ENCODE measurements at regions of chr9 and their contacts with region 1.

Region 1: DNA sequence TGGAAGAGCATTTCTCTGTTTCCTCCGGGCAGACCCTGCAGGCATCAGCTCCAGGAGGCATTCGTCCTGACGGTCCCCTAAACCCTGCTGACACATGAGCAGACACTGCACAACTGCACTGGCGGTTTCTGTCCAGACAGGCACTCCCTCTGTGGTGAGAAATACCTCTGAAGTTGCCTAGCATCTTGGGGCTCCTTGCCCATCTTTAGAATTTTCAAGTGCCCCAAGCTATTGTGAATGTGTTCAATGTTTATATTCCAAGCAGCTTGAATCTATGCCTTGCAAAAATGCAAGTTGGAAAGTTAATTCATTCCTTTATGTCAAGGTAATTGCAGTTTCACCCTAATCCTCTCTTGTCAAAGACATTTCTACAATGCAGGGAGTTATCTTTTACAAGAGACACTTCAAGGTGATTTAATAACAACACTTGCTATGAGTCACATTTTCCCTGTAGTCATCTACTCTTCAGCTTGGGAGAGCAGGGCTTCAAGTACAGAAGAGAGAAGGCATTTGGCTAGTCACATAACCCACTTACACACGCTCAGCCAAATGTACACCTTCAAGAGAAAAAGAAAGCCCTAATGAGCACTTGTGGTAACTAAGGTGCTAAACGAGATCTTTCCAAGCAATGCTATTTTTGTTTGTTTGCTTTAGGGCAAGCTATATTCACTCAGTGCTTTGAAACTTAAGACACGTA is 302.5 kb downstream of the MLLT3 start:
- DNase-seq: no peak
- H3K4me3 Mint-ChIP-seq: no peak overlapping the region
- H3K27ac Mint-ChIP-seq: peak overlapping the region; percentile 24
- H3K4me1 Mint-ChIP-seq: peaks cover 41% of the 10 kb centered on the region
- H3K27me3 Mint-ChIP-seq: no peaks in the 10 kb centered on the region

Region 2: DNA sequence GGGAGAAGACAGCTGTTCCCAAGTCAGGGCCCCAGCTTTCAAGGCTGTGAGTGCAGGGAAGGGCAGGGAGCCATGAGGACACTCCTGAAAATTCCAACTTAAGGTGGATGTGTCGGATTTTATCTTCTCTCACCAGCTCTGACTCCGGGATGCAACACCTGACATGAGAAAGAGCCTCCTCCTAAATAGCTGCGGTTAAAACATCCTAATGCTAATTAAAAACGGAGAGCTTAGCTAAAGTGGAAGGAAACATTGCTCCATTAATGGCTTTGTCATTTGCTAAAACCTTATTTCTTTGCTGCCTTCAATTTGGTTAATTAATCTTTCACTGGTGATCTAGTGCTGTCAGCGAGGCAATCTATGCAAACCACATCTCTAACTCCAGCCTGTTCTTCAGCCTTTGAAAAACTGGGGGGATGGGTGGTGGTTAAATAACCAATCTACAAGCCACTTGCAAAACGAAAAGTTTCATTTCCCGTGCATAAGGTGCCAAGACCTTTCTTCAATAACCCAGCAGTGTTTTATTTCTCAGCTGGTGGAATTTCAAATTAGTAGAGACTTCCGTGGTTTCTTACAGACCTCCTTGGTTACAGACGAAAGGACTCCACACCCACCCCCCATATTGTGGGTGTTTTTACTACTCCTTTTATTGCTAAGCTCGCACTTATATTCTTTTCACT is 77.1 kb before region 1 on chr9:
- intact Hi-C with region 1: loop called (anchors 5 kb)
- DNase-seq: peak; percentile 50
- H3K4me3 Mint-ChIP-seq: peak overlapping the region; percentile 22
- H3K27ac Mint-ChIP-seq: no peak overlapping the region
- H3K4me1 Mint-ChIP-seq: peaks cover 37% of the 10 kb centered on the region
- H3K27me3 Mint-ChIP-seq: peaks cover 28% of the 10 kb centered on the region

Region 3: DNA sequence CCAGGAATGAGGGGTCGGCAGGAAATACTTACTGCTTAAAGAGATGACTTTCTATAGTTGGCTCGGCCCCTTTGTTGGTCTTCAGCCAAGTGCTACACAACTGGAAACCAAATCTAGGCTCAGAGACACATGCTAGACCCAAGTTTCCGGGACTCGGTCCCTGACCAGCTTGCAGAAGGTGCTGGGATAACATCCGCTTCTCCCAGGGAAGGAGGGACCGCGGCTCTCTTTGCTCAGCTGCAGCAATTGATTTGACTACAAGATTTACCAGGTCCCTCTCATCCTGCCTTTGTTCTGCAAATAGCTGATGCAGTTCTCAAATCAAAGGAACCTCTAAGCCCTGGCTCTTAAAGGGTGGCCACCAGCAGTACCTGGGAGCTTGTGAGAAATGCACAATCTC is 12.2 kb before region 1 on chr9:
- intact Hi-C with region 1: no loop called
- DNase-seq: no peak
- H3K4me3 Mint-ChIP-seq: no peak overlapping the region
- H3K27ac Mint-ChIP-seq: no peak overlapping the region
- H3K4me1 Mint-ChIP-seq: peaks cover under 1% of the 10 kb centered on the region
- H3K27me3 Mint-ChIP-seq: peaks cover 11% of the 10 kb centered on the region

Region 4: DNA sequence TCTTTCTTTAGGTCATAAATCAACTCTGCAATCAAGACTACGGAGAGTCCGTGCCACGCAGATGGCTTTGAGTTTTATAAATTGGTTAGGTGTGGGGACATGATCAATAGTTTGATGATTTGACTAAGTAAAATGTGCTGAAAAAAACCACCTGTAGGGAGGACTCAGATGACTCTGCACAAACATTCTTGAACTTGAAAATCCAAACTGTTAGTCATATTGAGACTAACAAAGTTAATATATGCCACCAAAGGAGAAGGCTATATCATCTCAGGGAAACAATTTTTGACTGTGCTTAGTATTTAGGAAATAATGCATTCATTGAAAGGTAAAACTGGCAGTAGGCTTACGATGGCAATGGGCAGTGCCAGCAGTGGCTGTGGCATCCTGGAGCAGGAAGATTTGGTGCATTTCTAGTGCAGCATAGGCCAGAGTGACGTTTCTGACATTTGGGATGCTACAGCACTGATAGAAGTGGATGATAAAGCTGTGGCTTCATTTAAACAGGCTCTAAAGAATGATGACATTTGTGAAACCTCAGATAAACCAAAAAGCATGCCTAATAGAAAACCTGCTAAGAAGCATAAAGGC is 11.4 kb after region 1 on chr9:
- intact Hi-C with region 1: loop called (anchors 1 kb)
- DNase-seq: no peak
- H3K4me3 Mint-ChIP-seq: no peak overlapping the region
- H3K27ac Mint-ChIP-seq: peak overlapping the region; percentile 21
- H3K4me1 Mint-ChIP-seq: peaks cover 31% of the 10 kb centered on the region
- H3K27me3 Mint-ChIP-seq: peaks cover 6% of the 10 kb centered on the region

Measured in activated T-helper 2 cell treated with anti-CD3 and anti-CD28 coated beads, Interferon-gamma antibody, Interleukin-2, Interleukin-4, amounts not matched to agents 10 μg/mL and 5 μg/mL and 100 μg/mL, durations not matched to agents 14 hours and 24 hours and 36 hours (primary cell).